Endothelial cell of umbilical vein (primary cell): ENCODE measurements at regions of chr17 and their contacts with region 1.

Region 1: DNA sequence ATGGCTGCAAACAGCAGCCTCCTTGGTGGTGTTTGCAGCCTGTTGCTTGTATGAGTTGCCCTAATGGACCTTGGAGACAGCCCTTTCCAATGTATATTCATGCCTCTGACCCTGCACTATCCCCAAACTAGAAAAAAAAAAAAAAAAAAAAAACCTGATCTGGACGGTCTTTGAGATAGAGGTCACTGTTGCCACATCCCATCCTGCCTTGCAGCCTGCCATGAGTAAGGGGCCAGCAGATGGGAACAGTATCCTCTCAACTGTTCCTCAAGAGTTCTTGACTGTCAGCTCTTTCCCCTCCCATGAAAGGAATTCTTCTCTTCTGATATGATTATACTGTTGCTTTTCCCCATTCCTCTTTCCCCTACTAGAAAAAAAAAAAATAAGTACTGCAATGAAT is 152.4 kb downstream of the SSH2 start:
- DNase-seq: no peak
- H3K4me3 ChIP-seq: no peak overlapping the region
- H3K27ac ChIP-seq: no peak overlapping the region
- H3K4me1 ChIP-seq: peaks cover 6% of the 10 kb centered on the region
- H3K27me3 ChIP-seq: no peaks in the 10 kb centered on the region
- CTCF ChIP-seq: no peak
- POLR2A ChIP-seq: no peak

Region 2: GRCh38 chr17:29622337-29623282 is 155.1 kb before region 1 on chr17 and contains the start of gene CORO6:
- CTCF ChIA-PET with region 1: interaction called, 90 read pairs
- POLR2A ChIA-PET with region 1: interaction called, 3 read pairs
- dilution Hi-C with region 1: no loop called
- intact Hi-C with region 1: loop called (anchors 1 kb)
- DNase-seq: peak; percentile 50
- H3K4me3 ChIP-seq: peak within 1 kb of the TSS; percentile 31 to 73 (median 71)
- H3K27ac ChIP-seq: no peak within 1 kb of the TSS
- H3K4me1 ChIP-seq: peaks cover 11% of the 10 kb centered on the region
- H3K27me3 ChIP-seq: no peaks in the 10 kb centered on the region
- CTCF ChIP-seq: no peak
- POLR2A ChIP-seq: no peak
- total RNA-seq, gene CORO6: 7.8 and 10.7 TPM in 2 replicates

Region 3: GRCh38 chr17:29664743-29665480 is 112.8 kb before region 1 on chr17:
- CTCF ChIA-PET with region 1: interaction called, 16 read pairs
- POLR2A ChIA-PET with region 1: no interaction called
- dilution Hi-C with region 1: no loop called
- intact Hi-C with region 1: no loop called
- DNase-seq: peak; percentile 93
- H3K4me3 ChIP-seq: no peak overlapping the region
- H3K27ac ChIP-seq: peak overlapping the region; percentile 93
- H3K4me1 ChIP-seq: peaks cover 27% of the 10 kb centered on the region
- H3K27me3 ChIP-seq: no peaks in the 10 kb centered on the region
- CTCF ChIP-seq: no peak
- POLR2A ChIP-seq: no peak

Region 4: DNA sequence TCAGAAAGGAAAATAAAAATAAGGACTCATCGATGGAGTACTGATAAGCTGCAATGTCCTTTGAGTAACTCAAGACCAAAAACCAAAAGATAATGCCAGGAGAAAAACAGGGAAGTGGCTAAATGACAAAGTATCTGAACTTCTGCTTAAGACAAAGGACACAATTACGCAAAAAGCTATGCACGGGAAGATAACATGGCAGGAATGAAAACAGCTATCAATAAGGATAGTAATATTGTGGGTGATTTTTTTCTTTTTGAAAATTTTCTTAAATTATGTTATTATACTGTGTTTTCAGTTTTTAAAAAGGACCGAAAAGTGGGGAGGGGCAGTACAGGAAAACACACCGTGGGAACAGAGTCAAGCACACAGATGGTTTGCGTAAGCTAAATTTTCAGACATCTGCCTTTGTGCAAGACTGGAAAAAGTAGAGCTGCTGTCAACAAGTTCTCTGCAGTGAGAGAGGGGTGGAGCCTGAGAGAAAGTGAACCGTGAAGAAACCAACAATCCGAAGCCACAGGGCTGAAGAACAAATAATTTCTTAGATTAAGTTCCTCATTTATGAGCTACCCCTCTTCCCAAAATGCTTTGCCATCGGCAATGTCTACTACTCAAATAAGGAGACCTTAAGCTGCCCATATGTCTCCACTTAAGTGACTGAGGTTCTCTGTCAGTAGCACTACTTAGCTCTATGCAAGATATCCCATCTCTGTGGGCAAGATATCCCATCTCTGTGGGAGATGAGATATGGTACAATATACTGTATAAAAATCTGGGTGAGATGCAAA is 55.1 kb before region 1 on chr17:
- CTCF ChIA-PET with region 1: interaction called, 8 read pairs
- POLR2A ChIA-PET with region 1: no interaction called
- dilution Hi-C with region 1: no loop called
- intact Hi-C with region 1: loop called (anchors 2 kb)
- DNase-seq: peak; percentile 84
- H3K4me3 ChIP-seq: no peak overlapping the region
- H3K27ac ChIP-seq: peak overlapping the region; percentile 32
- H3K4me1 ChIP-seq: peaks cover 35% of the 10 kb centered on the region
- H3K27me3 ChIP-seq: no peaks in the 10 kb centered on the region
- CTCF ChIP-seq: no peak
- POLR2A ChIP-seq: no peak

Region 5: DNA sequence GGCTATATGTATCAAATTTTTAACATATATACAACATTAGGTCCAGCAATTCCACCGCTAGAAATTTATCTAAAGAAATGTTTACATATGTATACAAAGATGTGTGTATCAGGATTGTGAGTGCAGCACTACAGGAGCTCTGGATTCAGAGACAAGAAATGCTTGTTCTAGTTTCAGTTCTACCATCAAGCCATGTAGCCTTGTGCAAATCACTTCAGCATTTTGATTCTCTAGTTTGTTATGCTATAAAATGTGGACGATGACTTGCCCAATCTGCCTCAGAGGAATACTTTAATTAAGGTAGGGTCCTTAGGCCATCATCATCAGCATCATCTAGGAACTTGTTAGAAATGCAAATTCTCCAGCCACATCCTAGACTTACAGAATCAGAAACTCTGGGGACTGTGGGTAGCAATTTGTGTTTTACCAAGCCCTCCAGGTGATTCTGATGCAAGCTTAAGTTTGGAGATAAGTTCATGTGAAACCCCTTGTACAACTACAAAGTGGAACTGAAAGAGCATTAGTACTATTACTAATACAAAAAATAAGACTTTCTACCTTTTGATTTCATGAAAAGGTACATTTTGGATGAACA is 23.7 kb before region 1 on chr17:
- CTCF ChIA-PET with region 1: interaction called, 10 read pairs
- POLR2A ChIA-PET with region 1: no interaction called
- dilution Hi-C with region 1: no loop called
- intact Hi-C with region 1: no loop called
- DNase-seq: no peak
- H3K4me3 ChIP-seq: no peak overlapping the region
- H3K27ac ChIP-seq: no peak overlapping the region
- H3K4me1 ChIP-seq: no peaks in the 10 kb centered on the region
- H3K27me3 ChIP-seq: no peaks in the 10 kb centered on the region
- CTCF ChIP-seq: no peak
- POLR2A ChIP-seq: no peak

Region 6: DNA sequence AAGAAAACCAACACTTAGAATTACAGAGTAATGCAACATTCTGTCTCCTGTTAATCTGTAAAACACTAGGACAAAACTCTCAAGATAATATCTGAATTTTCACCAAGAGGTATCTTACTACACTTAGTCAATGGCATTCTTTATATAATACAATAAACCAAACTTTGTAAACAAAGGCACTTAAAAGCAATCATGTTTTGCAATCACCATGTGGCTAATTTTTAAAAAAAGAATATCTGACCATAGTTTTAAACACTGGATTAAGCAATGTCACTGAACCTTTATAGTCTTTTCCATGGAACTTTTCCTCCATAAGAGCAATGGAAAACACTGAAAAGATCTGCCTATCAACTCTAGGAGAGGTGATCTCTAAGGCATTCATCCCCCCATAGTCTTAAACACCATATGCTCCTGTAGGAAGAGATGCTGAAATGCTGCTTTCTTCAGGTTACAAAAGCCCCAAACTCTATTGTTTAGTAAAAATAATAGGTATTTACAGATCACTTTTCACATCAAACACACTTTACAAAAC is 10.8 kb before region 1 on chr17:
- CTCF ChIA-PET with region 1: interaction called, 42 read pairs
- POLR2A ChIA-PET with region 1: interaction called, 4 read pairs
- dilution Hi-C with region 1: no loop called
- intact Hi-C with region 1: no loop called
- DNase-seq: no peak
- H3K4me3 ChIP-seq: no peak overlapping the region
- H3K27ac ChIP-seq: no peak overlapping the region
- H3K4me1 ChIP-seq: no peaks in the 10 kb centered on the region
- H3K27me3 ChIP-seq: no peaks in the 10 kb centered on the region
- CTCF ChIP-seq: no peak
- POLR2A ChIP-seq: no peak